ENCODE measurements at regions of chr2 and their contacts with region 1.

Region 1: GRCh38 chr2:106316915-106317314 is 122.8 kb upstream of the UXS1 start:
- DNase-seq: no peak
- H3K4me3 ChIP-seq: no peak overlapping the region
- H3K27ac ChIP-seq: no peak overlapping the region
- H3K4me1 ChIP-seq: no peaks in the 10 kb centered on the region
- H3K27me3 ChIP-seq: no peaks in the 10 kb centered on the region
- CTCF ChIP-seq: no peak
- EP300 ChIP-seq: no peak
- POLR2A ChIP-seq: no peak

Region 2: DNA sequence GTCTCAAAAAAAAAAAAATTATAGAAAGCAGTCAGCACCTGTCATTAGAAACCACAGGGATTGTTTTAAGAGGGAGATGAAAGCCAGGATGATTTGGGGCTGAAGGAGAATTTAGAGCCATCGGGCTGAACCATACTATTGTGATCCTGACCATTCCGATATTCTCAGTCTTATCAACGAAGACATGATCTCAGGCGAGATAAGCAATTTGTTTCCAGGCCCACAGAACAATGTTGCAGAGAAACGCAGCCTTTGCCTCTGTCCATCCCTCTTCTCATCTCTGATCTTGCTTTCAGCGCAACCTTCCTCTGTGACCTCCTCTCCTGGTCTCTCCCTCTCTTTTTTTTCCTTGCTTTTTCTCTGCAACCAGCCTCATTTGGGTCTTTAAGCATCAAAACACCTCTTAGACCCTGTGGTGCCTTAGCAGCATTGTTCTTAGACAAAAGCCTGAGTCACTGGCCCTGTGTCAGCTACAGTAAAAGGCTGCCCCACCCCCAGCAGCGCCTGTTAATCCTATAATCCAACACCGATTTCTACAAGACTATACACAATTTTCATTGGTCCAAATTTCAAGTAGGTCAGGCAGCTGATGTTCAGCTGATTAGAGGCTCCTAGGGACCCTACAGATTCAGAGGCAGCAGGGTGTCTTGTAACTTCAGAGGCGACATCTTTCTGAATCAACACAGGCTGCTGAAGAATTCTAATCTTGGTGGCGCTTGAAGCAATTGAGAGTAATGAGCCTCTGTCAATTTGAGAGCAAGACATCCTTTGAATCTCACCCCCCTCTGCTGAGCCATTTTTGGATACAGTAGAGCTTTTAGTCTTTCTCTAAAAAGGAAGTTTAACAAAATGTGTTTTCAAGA is 366.2 kb before region 1 on chr2:
- intact Hi-C with region 1: loop called in 1 of 4 experiments (anchors 5 kb)
- DNase-seq: no peak
- H3K4me3 ChIP-seq: no peak overlapping the region
- H3K27ac ChIP-seq: no peak overlapping the region
- H3K4me1 ChIP-seq: no peaks in the 10 kb centered on the region
- H3K27me3 ChIP-seq: no peaks in the 10 kb centered on the region
- CTCF ChIP-seq: no peak
- EP300 ChIP-seq: no peak
- POLR2A ChIP-seq: no peak

Region 3: DNA sequence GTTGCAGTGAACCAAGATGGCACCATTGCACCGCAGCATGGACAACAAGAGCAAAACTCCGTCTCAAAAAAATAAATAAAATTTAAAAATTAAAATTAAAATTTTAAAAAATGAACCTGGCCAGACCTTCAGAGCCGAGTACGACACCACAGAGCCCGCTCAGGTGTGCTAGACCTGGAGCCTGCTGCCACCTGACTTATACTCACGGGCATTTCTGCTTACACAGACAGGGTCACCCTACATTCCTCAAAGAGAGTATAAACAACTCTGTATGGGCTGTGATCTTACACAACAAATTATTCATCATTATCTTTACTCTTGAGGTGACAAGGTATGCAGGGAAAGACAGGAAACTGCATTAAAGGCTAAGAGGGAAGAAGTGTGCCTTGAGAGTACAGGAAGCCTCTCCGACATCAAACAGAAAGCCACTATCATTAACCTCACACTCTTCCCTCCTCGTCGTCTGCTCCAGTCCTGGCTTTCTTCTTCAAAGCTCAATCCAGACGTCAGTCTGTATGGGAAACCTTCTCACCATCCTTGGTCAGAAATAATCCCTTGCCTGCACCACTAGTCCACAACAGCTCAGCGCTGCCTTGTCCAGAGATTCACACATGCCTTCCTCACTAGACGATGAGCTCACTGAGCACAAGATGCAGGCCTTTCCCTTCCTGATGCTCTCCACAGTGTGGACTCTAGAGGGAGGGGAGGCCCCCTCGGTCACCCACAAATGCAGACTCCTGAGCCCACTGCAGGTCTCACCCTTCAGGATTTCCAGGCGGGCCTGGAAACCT is 179.0 kb before region 1 on chr2:
- intact Hi-C with region 1: no loop called
- DNase-seq: no peak
- H3K4me3 ChIP-seq: no peak overlapping the region
- H3K27ac ChIP-seq: peak overlapping the region in 1 of 2 donors; percentile 57
- H3K4me1 ChIP-seq: peaks cover 14% of the 10 kb centered on the region
- H3K27me3 ChIP-seq: no peaks in the 10 kb centered on the region
- CTCF ChIP-seq: no peak
- EP300 ChIP-seq: no peak
- POLR2A ChIP-seq: no peak

Measured in ovary (tissue), 10 donors.